ENCODE measurements at regions of chr5 and their contacts with region 1.

Region 1: GRCh38 chr5:156934450-156935211 is 28.4 kb downstream of the TIMD4 start:
- DNase-seq: no peak
- ATAC-seq: peak; percentile 53
- H3K4me3 ChIP-seq: no peak overlapping the region
- H3K27ac ChIP-seq: no peak overlapping the region; the same call in none of the 2 replicates
- H3K4me1 ChIP-seq: peaks cover 29% of the 10 kb centered on the region
- H3K27me3 ChIP-seq: no peaks in the 10 kb centered on the region
- CTCF ChIP-seq: peak; percentile 78 to 85 (median 78)
- EP300 ChIP-seq: no peak
- POLR2A ChIP-seq: no peak
- RAD21 ChIP-seq: peak; percentile 96

Region 2: GRCh38 chr5:156237361-156237760 is 697.3 kb before region 1 on chr5:
- CTCF ChIA-PET with region 1: no interaction called
- POLR2A ChIA-PET with region 1: no interaction called
- RAD21 ChIA-PET with region 1: no interaction called
- SMC1A ChIA-PET with region 1: no interaction called
- in situ Hi-C with region 1: no loop called
- intact Hi-C with region 1: loop called (anchors 10 kb)
- DNase-seq: no peak
- ATAC-seq: peak; percentile 84
- H3K4me3 ChIP-seq: no peak overlapping the region
- H3K27ac ChIP-seq: no peak overlapping the region
- H3K4me1 ChIP-seq: no peaks in the 10 kb centered on the region
- H3K27me3 ChIP-seq: no peaks in the 10 kb centered on the region
- CTCF ChIP-seq: no peak
- EP300 ChIP-seq: no peak
- POLR2A ChIP-seq: no peak
- RAD21 ChIP-seq: no peak

Region 3: GRCh38 chr5:156715287-156715686 is 219.3 kb before region 1 on chr5:
- CTCF ChIA-PET with region 1: interaction called, 4 read pairs
- POLR2A ChIA-PET with region 1: no interaction called
- RAD21 ChIA-PET with region 1: interaction called, 3 read pairs
- SMC1A ChIA-PET with region 1: no interaction called
- in situ Hi-C with region 1: no loop called
- intact Hi-C with region 1: loop called (anchors 2 kb)
- DNase-seq: no peak
- ATAC-seq: no peak
- H3K4me3 ChIP-seq: no peak overlapping the region
- H3K27ac ChIP-seq: no peak overlapping the region
- H3K4me1 ChIP-seq: no peaks in the 10 kb centered on the region
- H3K27me3 ChIP-seq: no peaks in the 10 kb centered on the region; a peak in 1 of 4 replicates
- CTCF ChIP-seq: no peak
- EP300 ChIP-seq: no peak
- POLR2A ChIP-seq: no peak
- RAD21 ChIP-seq: no peak

Region 4: GRCh38 chr5:156835905-156836304 is 98.7 kb before region 1 on chr5:
- CTCF ChIA-PET with region 1: interaction called, 23 read pairs
- POLR2A ChIA-PET with region 1: interaction called, 3 read pairs
- RAD21 ChIA-PET with region 1: interaction called, 33 read pairs
- SMC1A ChIA-PET with region 1: interaction called, 39 read pairs
- in situ Hi-C with region 1: loop called (anchors 5 kb)
- intact Hi-C with region 1: loop called (anchors 1 kb)
- DNase-seq: no peak
- ATAC-seq: peak; percentile 88
- H3K4me3 ChIP-seq: no peak overlapping the region
- H3K27ac ChIP-seq: no peak overlapping the region
- H3K4me1 ChIP-seq: no peaks in the 10 kb centered on the region; the same call in 1 of the 2 replicates
- H3K27me3 ChIP-seq: no peaks in the 10 kb centered on the region
- CTCF ChIP-seq: peak; percentile 32 to 47 (median 39); a peak in 5 of 6 replicates
- EP300 ChIP-seq: no peak
- POLR2A ChIP-seq: no peak
- RAD21 ChIP-seq: peak; percentile 43

Region 5: DNA sequence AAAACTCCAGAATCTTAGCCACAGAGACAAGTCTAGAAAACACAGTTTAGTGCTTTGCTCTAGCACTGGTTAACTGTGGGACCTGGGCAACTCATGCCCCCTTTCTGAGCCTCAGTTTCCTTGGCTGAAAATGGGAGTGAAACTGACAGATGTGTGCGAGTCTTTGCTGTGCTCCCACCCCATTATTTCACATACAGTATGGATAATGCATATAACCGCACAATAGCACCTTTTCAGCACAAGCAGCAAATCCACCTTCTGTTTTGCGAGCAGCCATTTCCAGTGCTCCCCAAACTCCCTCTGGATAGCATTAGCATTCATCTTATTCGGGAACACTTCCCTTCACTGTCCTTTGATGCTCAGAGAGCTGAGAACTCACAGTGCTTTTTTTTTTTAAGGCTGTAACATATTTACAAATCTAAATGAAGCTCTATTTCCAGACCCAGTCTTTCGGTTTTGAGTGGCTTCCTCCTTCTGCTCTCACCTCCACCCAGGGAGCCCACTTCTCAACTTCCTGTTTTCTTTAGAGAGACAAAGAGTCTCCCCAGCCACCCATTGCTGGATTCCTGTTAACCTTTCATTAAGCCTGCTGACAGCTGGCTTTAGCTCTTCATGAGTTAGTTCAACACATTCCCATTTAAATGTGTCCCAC is 20.8 kb before region 1 on chr5:
- CTCF ChIA-PET with region 1: interaction called, 76 read pairs
- POLR2A ChIA-PET with region 1: interaction called, 81 read pairs
- RAD21 ChIA-PET with region 1: interaction called, 82 read pairs
- SMC1A ChIA-PET with region 1: interaction called, 228 read pairs
- in situ Hi-C with region 1: no loop called
- intact Hi-C with region 1: no loop called
- DNase-seq: peak; percentile 68
- ATAC-seq: peak; percentile 87
- H3K4me3 ChIP-seq: peak overlapping the region; percentile 46; the same call in 1 of the 2 replicates
- H3K27ac ChIP-seq: peak overlapping the region; percentile 89
- H3K4me1 ChIP-seq: peaks cover 17% of the 10 kb centered on the region
- H3K27me3 ChIP-seq: no peaks in the 10 kb centered on the region
- CTCF ChIP-seq: no peak
- EP300 ChIP-seq: no peak
- POLR2A ChIP-seq: no peak
- RAD21 ChIP-seq: no peak

Region 6: DNA sequence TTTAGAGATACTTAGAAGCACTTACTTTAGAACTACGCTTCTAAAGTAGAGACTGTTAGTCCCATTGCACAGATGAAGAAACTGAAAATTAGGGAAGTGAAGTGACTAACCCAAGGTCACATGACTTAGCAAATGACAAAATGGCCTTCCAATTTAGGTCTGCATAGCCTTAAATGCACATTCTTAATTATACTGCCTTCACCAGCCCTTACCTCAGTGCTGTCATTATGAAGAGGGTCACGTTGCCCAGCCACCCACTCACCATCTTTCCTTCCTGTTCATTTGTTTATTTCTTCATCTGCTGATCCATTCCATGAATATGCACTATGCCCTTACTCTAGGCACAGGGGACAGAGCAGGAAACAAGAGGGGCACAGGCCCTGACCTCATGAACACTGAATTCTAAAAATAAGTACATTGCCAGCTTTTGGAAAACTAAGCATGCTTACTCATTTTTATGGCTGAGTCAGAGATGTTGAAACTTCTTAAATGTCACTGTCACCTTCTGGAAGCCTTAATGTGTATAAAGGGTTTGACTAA is 165.6 kb after region 1 on chr5:
- CTCF ChIA-PET with region 1: no interaction called
- POLR2A ChIA-PET with region 1: interaction called, 11 read pairs
- RAD21 ChIA-PET with region 1: no interaction called
- SMC1A ChIA-PET with region 1: no interaction called
- in situ Hi-C with region 1: no loop called
- intact Hi-C with region 1: no loop called
- DNase-seq: peak; percentile 11
- ATAC-seq: peak; percentile 66
- H3K4me3 ChIP-seq: no peak overlapping the region
- H3K27ac ChIP-seq: no peak overlapping the region
- H3K4me1 ChIP-seq: no peaks in the 10 kb centered on the region
- H3K27me3 ChIP-seq: no peaks in the 10 kb centered on the region
- CTCF ChIP-seq: no peak
- EP300 ChIP-seq: no peak
- POLR2A ChIP-seq: no peak
- RAD21 ChIP-seq: no peak

Region 7: GRCh38 chr5:157142317-157143126 is 207.9 kb after region 1 on chr5 and contains the start of gene MED7:
- CTCF ChIA-PET with region 1: interaction called, 7 read pairs
- POLR2A ChIA-PET with region 1: no interaction called
- RAD21 ChIA-PET with region 1: interaction called, 3 read pairs
- SMC1A ChIA-PET with region 1: interaction called, 10 read pairs
- in situ Hi-C with region 1: no loop called
- intact Hi-C with region 1: no loop called
- DNase-seq: peak; percentile 99
- ATAC-seq: peak; percentile 100
- H3K4me3 ChIP-seq: peak within 1 kb of the TSS; percentile 88
- H3K27ac ChIP-seq: peak within 1 kb of the TSS; percentile 99
- H3K4me1 ChIP-seq: peaks cover 7% of the 10 kb centered on the region
- H3K27me3 ChIP-seq: no peaks in the 10 kb centered on the region
- CTCF ChIP-seq: no peak
- EP300 ChIP-seq: no peak
- POLR2A ChIP-seq: peak; percentile 96
- RAD21 ChIP-seq: no peak
- polyA plus RNA-seq, gene MED7: 42.6 to 47.7 TPM

Region 8: GRCh38 chr5:158119961-158120723 is 1185.5 kb after region 1 on chr5:
- CTCF ChIA-PET with region 1: no interaction called
- POLR2A ChIA-PET with region 1: no interaction called
- RAD21 ChIA-PET with region 1: no interaction called
- SMC1A ChIA-PET with region 1: no interaction called
- in situ Hi-C with region 1: no loop called
- intact Hi-C with region 1: no loop called
- DNase-seq: no peak
- ATAC-seq: no peak
- H3K4me3 ChIP-seq: no peak overlapping the region
- H3K27ac ChIP-seq: no peak overlapping the region
- H3K4me1 ChIP-seq: no peaks in the 10 kb centered on the region
- H3K27me3 ChIP-seq: no peaks in the 10 kb centered on the region; a peak in 2 of 4 replicates
- CTCF ChIP-seq: no peak
- EP300 ChIP-seq: no peak
- POLR2A ChIP-seq: no peak
- RAD21 ChIP-seq: no peak

Measured in GM12878 (cell line).